ENCODE measurements at regions of chr11 and their contacts with region 1.

Region 1: GRCh38 chr11:12331239-12331874 is 46.0 kb upstream of the PARVA start:
- DNase-seq: peak; percentile 22 to 81 (median 73)
- ATAC-seq: no peak
- H3K4me3 ChIP-seq: no peak overlapping the region
- H3K4me3 Mint-ChIP-seq: no peak overlapping the region
- H3K27ac ChIP-seq: no peak overlapping the region
- H3K27ac Mint-ChIP-seq: no peak overlapping the region
- H3K4me1 ChIP-seq: no peaks in the 10 kb centered on the region
- H3K4me1 Mint-ChIP-seq: peaks cover 5% of the 10 kb centered on the region
- H3K27me3 ChIP-seq: no peaks in the 10 kb centered on the region
- H3K27me3 Mint-ChIP-seq: no peaks in the 10 kb centered on the region
- CTCF ChIP-seq: peak; percentile 80

Region 2: GRCh38 chr11:12301379-12301778 is 30.0 kb before region 1 on chr11:
- CTCF ChIA-PET with region 1: no interaction called
- POLR2A ChIA-PET with region 1: no interaction called
- intact Hi-C with region 1: no loop called
- DNase-seq: no peak
- ATAC-seq: no peak
- H3K4me3 ChIP-seq: no peak overlapping the region
- H3K4me3 Mint-ChIP-seq: no peak overlapping the region
- H3K27ac ChIP-seq: no peak overlapping the region
- H3K27ac Mint-ChIP-seq: no peak overlapping the region
- H3K4me1 ChIP-seq: no peaks in the 10 kb centered on the region
- H3K4me1 Mint-ChIP-seq: no peaks in the 10 kb centered on the region
- H3K27me3 ChIP-seq: no peaks in the 10 kb centered on the region
- H3K27me3 Mint-ChIP-seq: no peaks in the 10 kb centered on the region
- CTCF ChIP-seq: no peak

Region 3: GRCh38 chr11:12343526-12343925 is 12.2 kb after region 1 on chr11:
- CTCF ChIA-PET with region 1: interaction called, 26 read pairs
- POLR2A ChIA-PET with region 1: no interaction called
- intact Hi-C with region 1: no loop called
- DNase-seq: no peak
- ATAC-seq: no peak
- H3K4me3 ChIP-seq: no peak overlapping the region
- H3K4me3 Mint-ChIP-seq: no peak overlapping the region
- H3K27ac ChIP-seq: no peak overlapping the region
- H3K27ac Mint-ChIP-seq: no peak overlapping the region
- H3K4me1 ChIP-seq: no peaks in the 10 kb centered on the region
- H3K4me1 Mint-ChIP-seq: no peaks in the 10 kb centered on the region
- H3K27me3 ChIP-seq: no peaks in the 10 kb centered on the region
- H3K27me3 Mint-ChIP-seq: no peaks in the 10 kb centered on the region
- CTCF ChIP-seq: no peak

Region 4: DNA sequence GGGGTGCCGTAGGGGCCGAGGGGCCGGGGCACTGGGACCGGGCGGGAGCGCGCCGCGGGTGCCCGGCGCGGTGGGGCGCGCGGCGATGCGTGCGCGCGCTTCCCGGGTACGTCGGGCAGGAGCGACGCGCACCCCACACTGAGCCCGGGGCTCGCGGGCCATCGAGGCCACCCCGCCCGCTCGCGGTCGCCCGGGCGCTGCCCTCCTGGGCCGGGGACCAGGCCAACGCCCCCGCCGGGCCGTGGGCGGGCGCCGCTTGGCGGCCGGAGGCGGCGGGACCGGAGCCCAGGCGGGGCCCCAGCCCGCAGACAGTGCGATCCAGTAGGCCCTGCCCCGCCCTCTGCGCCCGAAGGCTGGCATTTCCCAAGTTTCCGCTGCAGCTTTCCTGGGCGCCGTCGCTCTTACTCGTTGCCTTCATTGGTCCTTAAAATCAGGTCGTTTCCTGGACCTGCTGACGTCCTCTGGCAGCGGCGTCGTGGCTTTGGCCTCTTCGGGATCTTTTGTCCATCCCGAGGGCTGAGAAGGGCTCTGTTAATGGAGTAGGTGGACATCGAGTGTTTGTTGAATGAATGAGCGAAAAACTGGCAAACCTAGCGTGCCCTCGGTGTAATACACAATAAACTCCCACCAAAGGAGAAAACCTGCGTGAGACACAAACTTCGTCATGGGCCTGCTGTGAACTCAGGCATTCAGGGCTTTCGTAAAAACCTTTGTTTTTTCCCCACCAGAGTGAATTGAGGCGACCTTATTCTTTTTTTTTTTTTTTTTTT is 46.7 kb after region 1 on chr11:
- CTCF ChIA-PET with region 1: interaction called, 34 read pairs
- POLR2A ChIA-PET with region 1: no interaction called
- intact Hi-C with region 1: loop called in 1 of 2 experiments (anchors 5 kb)
- DNase-seq: peak in 2 of 9 experiments; percentile 31 to 38
- ATAC-seq: peak; percentile 57
- H3K4me3 ChIP-seq: peak overlapping the region; percentile 33 to 42
- H3K4me3 Mint-ChIP-seq: peak overlapping the region; percentile 83
- H3K27ac ChIP-seq: no peak overlapping the region
- H3K27ac Mint-ChIP-seq: peak overlapping the region; percentile 20
- H3K4me1 ChIP-seq: peaks cover 11% of the 10 kb centered on the region
- H3K4me1 Mint-ChIP-seq: peaks cover 13% of the 10 kb centered on the region
- H3K27me3 ChIP-seq: peaks cover 0 to 2% of the 10 kb centered on the region in 2 experiments
- H3K27me3 Mint-ChIP-seq: peaks cover 23% of the 10 kb centered on the region
- CTCF ChIP-seq: no peak

Region 5: GRCh38 chr11:12496171-12497025 is 165.0 kb after region 1 on chr11:
- CTCF ChIA-PET with region 1: interaction called, 6 read pairs
- POLR2A ChIA-PET with region 1: no interaction called
- intact Hi-C with region 1: loop called (anchors 5 kb)
- DNase-seq: peak in 1 of 9 experiments; percentile 11
- ATAC-seq: no peak
- H3K4me3 ChIP-seq: no peak overlapping the region
- H3K4me3 Mint-ChIP-seq: no peak overlapping the region
- H3K27ac ChIP-seq: no peak overlapping the region
- H3K27ac Mint-ChIP-seq: no peak overlapping the region
- H3K4me1 ChIP-seq: no peaks in the 10 kb centered on the region
- H3K4me1 Mint-ChIP-seq: no peaks in the 10 kb centered on the region
- H3K27me3 ChIP-seq: no peaks in the 10 kb centered on the region
- H3K27me3 Mint-ChIP-seq: peaks cover 4% of the 10 kb centered on the region
- CTCF ChIP-seq: no peak

Region 6: GRCh38 chr11:12893787-12894672 is 562.7 kb after region 1 on chr11:
- CTCF ChIA-PET with region 1: interaction called, 139 read pairs
- POLR2A ChIA-PET with region 1: interaction called, 3 read pairs
- intact Hi-C with region 1: loop called (anchors 1 kb)
- DNase-seq: peak in 8 of 9 experiments; percentile 13 to 55 (median 46)
- ATAC-seq: no peak
- H3K4me3 ChIP-seq: no peak overlapping the region
- H3K4me3 Mint-ChIP-seq: no peak overlapping the region
- H3K27ac ChIP-seq: no peak overlapping the region
- H3K27ac Mint-ChIP-seq: no peak overlapping the region
- H3K4me1 ChIP-seq: no peaks in the 10 kb centered on the region
- H3K4me1 Mint-ChIP-seq: no peaks in the 10 kb centered on the region
- H3K27me3 ChIP-seq: no peaks in the 10 kb centered on the region
- H3K27me3 Mint-ChIP-seq: peaks cover 15% of the 10 kb centered on the region
- CTCF ChIP-seq: peak; percentile 78

Region 7: DNA sequence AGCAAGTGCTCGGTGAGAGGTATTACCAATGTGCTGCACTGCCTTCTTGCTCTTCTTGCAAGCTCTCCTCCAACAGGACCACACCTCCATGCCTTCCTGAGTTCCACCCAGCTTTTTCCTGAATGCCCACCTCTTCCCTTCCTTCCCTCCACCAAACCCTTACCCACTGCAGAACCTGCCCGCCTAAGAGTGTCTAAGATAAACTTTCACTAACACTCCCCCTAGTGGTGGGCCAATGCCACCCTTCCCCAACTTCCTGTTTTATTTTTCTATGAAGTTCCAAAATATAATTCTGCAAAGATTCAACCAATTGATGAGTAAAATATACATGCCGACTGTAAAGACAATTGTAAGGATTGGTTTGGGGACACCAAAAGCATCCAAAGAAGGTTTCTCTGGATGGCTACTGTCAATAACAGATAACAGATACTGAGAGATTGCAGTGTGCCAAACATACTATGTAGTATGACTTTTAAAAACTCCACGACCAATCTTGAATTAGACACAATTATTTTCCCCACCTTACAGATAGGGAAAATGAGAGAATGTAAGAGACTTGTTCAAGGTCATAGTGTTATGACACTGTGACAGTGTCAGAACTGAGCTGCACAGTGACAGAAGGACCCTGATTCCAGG is 907.6 kb after region 1 on chr11:
- CTCF ChIA-PET with region 1: interaction called, 5 read pairs
- POLR2A ChIA-PET with region 1: no interaction called
- intact Hi-C with region 1: loop called (anchors 1 kb)
- DNase-seq: peak; percentile 13 to 70 (median 56)
- ATAC-seq: peak; percentile 79
- H3K4me3 ChIP-seq: no peak overlapping the region
- H3K4me3 Mint-ChIP-seq: no peak overlapping the region
- H3K27ac ChIP-seq: no peak overlapping the region
- H3K27ac Mint-ChIP-seq: no peak overlapping the region
- H3K4me1 ChIP-seq: no peaks in the 10 kb centered on the region
- H3K4me1 Mint-ChIP-seq: peaks cover 1% of the 10 kb centered on the region
- H3K27me3 ChIP-seq: no peaks in the 10 kb centered on the region
- H3K27me3 Mint-ChIP-seq: peaks cover 13% of the 10 kb centered on the region
- CTCF ChIP-seq: peak; percentile 86